Activated CD8-positive, alpha-beta T cell treated with anti-CD3 and anti-CD28 coated beads for 36 hours (primary cell): ENCODE measurements at regions of chr16 and their contacts with region 1.

Region 1: GRCh38 chr16:30472328-30472942 is at the start of gene ITGAL:
- DNase-seq: peak; percentile 94
- ATAC-seq: peak; percentile 69
- H3K4me3 Mint-ChIP-seq: peak within 1 kb of the TSS; percentile 100
- H3K27ac Mint-ChIP-seq: peak within 1 kb of the TSS; percentile 96
- H3K4me1 Mint-ChIP-seq: peaks cover 54% of the 10 kb centered on the region
- H3K27me3 Mint-ChIP-seq: no peaks in the 10 kb centered on the region
- CTCF ChIP-seq: no peak
- total RNA-seq, gene ITGAL: 274 to 285 TPM

Region 2: DNA sequence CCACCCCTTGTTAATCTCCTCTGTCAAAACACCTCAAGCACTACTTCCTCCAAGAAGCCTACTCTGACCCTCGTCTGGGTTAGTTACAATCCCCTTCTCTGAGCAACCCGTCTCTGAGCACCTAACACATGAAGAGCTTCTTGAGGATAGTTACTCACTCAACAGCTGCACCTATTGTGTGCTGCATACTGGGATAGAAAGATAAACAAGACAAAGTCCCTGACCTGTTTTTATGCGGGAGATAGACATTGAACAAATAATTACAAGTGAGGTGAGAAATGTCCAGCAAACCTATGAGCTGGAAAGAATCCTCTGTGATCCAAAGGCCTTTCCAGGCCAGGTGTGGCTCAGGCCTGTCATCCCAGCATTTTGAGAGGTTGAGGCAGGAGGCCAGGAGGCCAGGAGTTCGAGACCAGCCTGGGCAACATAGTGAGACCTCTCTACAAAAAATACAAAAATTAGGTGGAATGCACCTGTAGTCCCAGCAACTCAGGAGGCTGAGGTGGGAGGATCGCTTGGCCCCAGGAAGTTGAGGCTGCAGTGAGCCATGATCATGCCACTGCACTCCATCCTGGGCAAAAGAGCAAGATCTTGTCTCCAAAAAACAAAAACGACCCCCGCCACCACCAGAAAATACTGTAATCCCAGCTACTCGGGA is 70.5 kb before region 1 on chr16:
- CTCF ChIA-PET with region 1: no interaction called
- POLR2A ChIA-PET with region 1: no interaction called
- intact Hi-C with region 1: no loop called
- DNase-seq: no peak
- ATAC-seq: no peak
- H3K4me3 Mint-ChIP-seq: peak overlapping the region; percentile 4
- H3K27ac Mint-ChIP-seq: peak overlapping the region; percentile 3
- H3K4me1 Mint-ChIP-seq: peaks cover 42% of the 10 kb centered on the region
- H3K27me3 Mint-ChIP-seq: no peaks in the 10 kb centered on the region
- CTCF ChIP-seq: no peak

Region 3: DNA sequence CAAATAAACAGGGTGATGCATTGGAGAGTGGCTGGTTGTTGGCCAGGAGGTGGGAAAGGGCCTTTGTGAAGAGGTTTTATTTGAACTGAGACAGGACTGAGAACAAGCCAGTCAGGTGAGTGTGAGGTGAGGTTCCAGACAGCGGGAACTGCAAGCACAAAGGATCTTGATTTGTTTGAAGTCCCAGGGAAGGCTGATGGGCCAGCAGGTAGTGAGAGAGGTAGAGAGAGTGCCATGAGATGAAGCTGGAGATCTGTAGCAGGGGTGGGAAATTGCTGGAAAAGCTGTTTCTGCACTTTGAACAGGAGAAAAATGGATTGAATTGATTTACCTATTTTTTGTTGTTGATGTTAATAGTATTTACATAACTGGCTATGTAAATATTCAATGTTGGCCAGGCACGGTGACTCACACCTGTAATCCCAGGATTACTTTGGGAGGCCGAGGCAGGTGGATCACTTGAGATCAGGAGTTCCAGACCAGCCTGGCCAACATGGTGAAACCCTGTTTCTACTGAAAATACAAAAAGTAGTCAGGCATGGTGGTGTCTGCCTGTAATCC is 34.9 kb before region 1 on chr16:
- CTCF ChIA-PET with region 1: interaction called, 5 read pairs
- POLR2A ChIA-PET with region 1: interaction called, 4 read pairs
- intact Hi-C with region 1: loop called (anchors 5 kb)
- DNase-seq: no peak
- ATAC-seq: no peak
- H3K4me3 Mint-ChIP-seq: no peak overlapping the region
- H3K27ac Mint-ChIP-seq: no peak overlapping the region
- H3K4me1 Mint-ChIP-seq: peaks cover 22% of the 10 kb centered on the region
- H3K27me3 Mint-ChIP-seq: no peaks in the 10 kb centered on the region
- CTCF ChIP-seq: no peak

Region 4: GRCh38 chr16:30458561-30459394 is 13.7 kb before region 1 on chr16:
- CTCF ChIA-PET with region 1: interaction called, 55 read pairs
- POLR2A ChIA-PET with region 1: interaction called, 280 read pairs
- intact Hi-C with region 1: loop called (anchors 1 kb)
- DNase-seq: peak; percentile 97
- ATAC-seq: peak; percentile 95
- H3K4me3 Mint-ChIP-seq: peak overlapping the region; percentile 62
- H3K27ac Mint-ChIP-seq: peak overlapping the region; percentile 98
- H3K4me1 Mint-ChIP-seq: peaks cover 67% of the 10 kb centered on the region
- H3K27me3 Mint-ChIP-seq: no peaks in the 10 kb centered on the region
- CTCF ChIP-seq: no peak

Region 5: GRCh38 chr16:30491744-30492308 is 19.4 kb after region 1 on chr16:
- CTCF ChIA-PET with region 1: interaction called, 4 read pairs
- POLR2A ChIA-PET with region 1: interaction called, 26 read pairs
- intact Hi-C with region 1: no loop called
- DNase-seq: peak; percentile 24
- ATAC-seq: peak; percentile 64
- H3K4me3 Mint-ChIP-seq: no peak overlapping the region
- H3K27ac Mint-ChIP-seq: peak overlapping the region; percentile 76
- H3K4me1 Mint-ChIP-seq: peaks cover 39% of the 10 kb centered on the region
- H3K27me3 Mint-ChIP-seq: no peaks in the 10 kb centered on the region
- CTCF ChIP-seq: no peak